ENCODE measurements at regions of chr15 and their contacts with region 1.

Region 1: GRCh38 chr15:39327005-39327730 is 253.7 kb upstream of the THBS1 start:
- DNase-seq: no peak
- ATAC-seq: peak; percentile 50 to 70
- H3K4me3 ChIP-seq: no peak overlapping the region
- H3K27ac ChIP-seq: no peak overlapping the region
- H3K4me1 ChIP-seq: no peaks in the 10 kb centered on the region
- H3K27me3 ChIP-seq: no peaks in the 10 kb centered on the region

Region 2: GRCh38 chr15:39376371-39376909 is 49.3 kb after region 1 on chr15:
- intact Hi-C with region 1: loop called in 1 of 4 experiments (anchors 2 kb)
- DNase-seq: no peak
- ATAC-seq: no peak
- H3K4me3 ChIP-seq: no peak overlapping the region
- H3K27ac ChIP-seq: no peak overlapping the region
- H3K4me1 ChIP-seq: no peaks in the 10 kb centered on the region
- H3K27me3 ChIP-seq: no peaks in the 10 kb centered on the region

Region 3: DNA sequence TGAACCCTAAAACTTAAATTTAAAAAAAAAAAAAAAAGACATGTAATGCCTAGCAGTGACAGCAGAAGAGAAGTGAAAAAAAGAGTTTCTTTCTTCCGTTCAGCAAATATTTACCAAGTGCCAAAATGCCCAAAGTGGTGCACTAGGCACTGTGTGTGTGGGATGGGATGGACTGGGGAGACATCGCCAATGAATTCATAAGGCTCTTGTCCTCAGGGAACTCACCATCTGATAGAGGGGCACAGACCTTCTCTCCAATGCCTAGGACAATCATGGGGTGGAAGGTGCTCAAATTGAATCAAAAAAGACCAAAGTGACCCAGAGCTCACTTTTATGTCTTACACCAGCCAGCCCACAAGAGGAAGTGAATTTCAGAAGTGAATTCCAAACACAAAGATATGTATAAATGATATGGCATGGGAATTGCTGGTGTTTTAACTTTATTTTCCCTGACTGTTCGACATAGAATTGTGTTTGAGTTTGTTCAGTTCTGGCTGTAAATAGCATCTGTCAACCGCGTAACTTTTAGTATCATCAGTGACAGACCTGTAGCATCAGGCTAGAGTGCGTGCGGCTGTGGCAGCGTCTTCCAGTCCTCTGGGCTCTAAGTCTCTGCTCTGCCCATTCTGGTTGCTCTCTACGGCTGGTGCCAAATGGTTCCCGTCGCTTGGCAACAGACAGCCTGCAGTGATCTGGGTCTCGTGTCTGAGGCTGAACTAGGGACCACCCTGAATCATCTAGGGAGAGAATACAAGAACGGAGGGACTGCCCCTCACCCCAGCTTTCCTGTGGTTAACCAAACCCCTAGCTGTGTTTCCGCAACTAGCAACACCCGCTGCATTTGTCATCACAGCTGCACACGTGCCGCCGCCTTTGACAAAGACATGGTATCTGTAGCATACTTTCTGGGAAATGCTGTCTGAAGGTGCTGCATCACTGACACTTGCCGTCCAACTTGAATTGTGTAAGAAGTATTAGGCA is 99.7 kb after region 1 on chr15:
- intact Hi-C with region 1: no loop called
- DNase-seq: peak; percentile 59 to 80 (median 70)
- ATAC-seq: peak; percentile 70 to 79
- H3K4me3 ChIP-seq: no peak overlapping the region
- H3K27ac ChIP-seq: peak overlapping the region; percentile 84
- H3K4me1 ChIP-seq: peaks cover 2% of the 10 kb centered on the region
- H3K27me3 ChIP-seq: no peaks in the 10 kb centered on the region